Kidney (tissue), 22 donors: ENCODE measurements at regions of chr17 and their contacts with region 1.

Region 1: DNA sequence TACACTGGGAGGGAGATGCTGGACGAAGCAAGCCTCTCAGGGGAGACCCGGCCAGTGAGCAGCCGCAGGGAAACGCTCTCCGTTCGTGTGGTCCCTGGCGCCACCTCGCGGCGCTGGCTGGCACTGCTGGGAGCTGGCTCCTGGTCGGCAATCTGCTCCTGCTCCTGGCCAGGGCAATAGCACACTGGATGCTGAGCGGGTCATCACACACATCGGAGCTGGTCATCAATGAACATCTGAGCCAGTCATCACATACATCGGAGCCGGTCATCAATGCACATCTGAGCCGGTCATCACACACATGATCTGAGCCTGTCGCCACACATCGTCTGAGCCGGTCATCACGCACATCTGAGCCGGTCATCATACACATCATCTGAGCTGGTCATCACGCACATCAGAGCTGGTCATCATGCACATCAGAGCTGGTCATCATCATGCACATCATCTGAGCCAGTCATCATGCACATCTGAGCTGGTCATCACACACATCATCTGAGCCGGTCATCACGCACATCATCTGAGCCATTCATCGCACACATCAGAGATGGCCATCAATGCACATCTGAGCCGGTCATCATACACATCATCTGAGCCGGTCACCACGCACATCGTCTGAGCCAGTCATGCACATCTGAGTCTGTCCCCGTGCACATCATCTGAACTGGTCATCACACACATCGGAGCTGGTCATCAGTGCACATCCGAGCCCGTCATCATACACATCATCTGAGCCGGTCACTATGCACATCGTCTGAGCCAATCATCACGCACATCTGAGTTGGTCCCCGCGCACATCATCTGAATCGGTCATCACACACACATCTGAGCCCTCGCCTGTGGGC is 217.3 kb downstream of the RBFOX3 start:
- DNase-seq: peak; percentile 87 to 89 (median 88)
- H3K4me3 ChIP-seq: no peak overlapping the region
- H3K27ac ChIP-seq: no peak overlapping the region
- H3K4me1 ChIP-seq: peaks cover 0 to 2% (median 0%) of the 10 kb centered on the region in 3 donors
- H3K27me3 ChIP-seq: peaks cover 22% of the 10 kb centered on the region
- CTCF ChIP-seq: peak; percentile 94

Region 2: DNA sequence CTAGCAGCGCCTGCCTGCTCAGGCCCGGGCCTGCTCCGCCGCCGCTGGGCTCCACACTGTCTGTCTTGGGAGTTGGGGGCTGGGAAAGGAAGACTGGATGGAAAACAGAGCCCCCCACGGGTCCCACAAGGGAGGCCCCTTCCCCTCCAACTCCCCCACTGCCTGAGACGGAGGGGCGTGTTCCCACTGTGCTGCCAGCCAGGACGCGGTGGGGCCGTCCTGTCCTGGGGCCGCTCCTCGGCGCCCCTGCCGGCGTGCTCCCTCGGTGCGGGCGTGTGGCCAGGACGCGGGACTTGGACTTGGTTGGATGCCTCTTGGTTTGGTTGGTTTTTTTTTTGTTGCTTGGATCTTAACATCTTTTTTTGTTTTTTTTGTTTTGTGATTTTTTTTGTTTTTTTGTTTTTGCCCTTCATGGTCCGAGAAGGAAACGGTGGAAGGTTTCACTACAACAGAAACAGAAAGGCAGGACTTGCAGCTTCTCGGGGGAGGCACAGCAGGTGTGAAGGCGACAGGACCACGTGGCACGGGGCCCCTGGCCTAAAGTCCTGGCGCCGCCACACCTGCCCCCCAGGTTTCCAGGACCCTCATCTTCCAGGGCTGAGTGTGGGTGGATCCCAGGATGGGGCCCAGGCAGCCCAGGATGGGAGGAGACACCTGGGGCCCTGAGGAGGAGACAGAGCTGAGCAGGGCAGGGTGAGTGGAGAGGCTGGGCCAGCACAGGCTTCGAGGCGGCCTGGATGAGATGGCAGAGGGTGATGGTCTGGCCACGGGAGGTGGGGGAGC is 302.9 kb before region 1 on chr17:
- intact Hi-C with region 1: loop called (anchors 5 kb)
- DNase-seq: peak in 4 of 5 donors; percentile 69 to 83 (median 76)
- H3K4me3 ChIP-seq: no peak overlapping the region
- H3K27ac ChIP-seq: no peak overlapping the region
- H3K4me1 ChIP-seq: no peaks in the 10 kb centered on the region
- H3K27me3 ChIP-seq: no peaks in the 10 kb centered on the region
- CTCF ChIP-seq: no peak

Region 3: GRCh38 chr17:79294459-79295071 is 99.0 kb before region 1 on chr17:
- intact Hi-C with region 1: no loop called
- DNase-seq: peak in 4 of 5 donors; percentile 92 to 94 (median 92)
- H3K4me3 ChIP-seq: no peak overlapping the region
- H3K27ac ChIP-seq: no peak overlapping the region
- H3K4me1 ChIP-seq: no peaks in the 10 kb centered on the region
- H3K27me3 ChIP-seq: peaks cover 5% of the 10 kb centered on the region
- CTCF ChIP-seq: no peak